ENCODE measurements at regions of chr5 and their contacts with region 1.

Region 1: GRCh38 chr5:157761690-157762621 is 18.4 kb downstream of the LSM11 start:
- DNase-seq: no peak

Region 2: GRCh38 chr5:157994906-157995519 is 233.1 kb after region 1 on chr5:
- intact Hi-C with region 1: loop called in 1 of 2 experiments (anchors 2 kb)
- DNase-seq: peak; percentile 82

Region 3: GRCh38 chr5:158324237-158324636 is 562.3 kb after region 1 on chr5:
- intact Hi-C with region 1: no loop called
- DNase-seq: no peak

Measured in posterior vena cava (tissue), 2 donors.